ENCODE measurements at regions of chr4 and their contacts with region 1.

Region 1: GRCh38 chr4:159906051-159906450 is 803.2 kb downstream of the RAPGEF2 start:
- DNase-seq: no peak
- ATAC-seq: no peak

Region 2: GRCh38 chr4:158333820-158334219 is 1572.2 kb before region 1 on chr4:
- intact Hi-C with region 1: no loop called
- DNase-seq: no peak
- ATAC-seq: no peak

Region 3: GRCh38 chr4:161881370-161881769 is 1975.3 kb after region 1 on chr4:
- intact Hi-C with region 1: loop called (anchors 5 kb)
- DNase-seq: no peak
- ATAC-seq: no peak